Transverse colon (tissue), 4 donors: ENCODE measurements at regions of chr13 and their contacts with region 1.

Region 1: GRCh38 chr13:109156181-109156935 is 526.9 kb downstream of the MYO16 start:
- DNase-seq: no peak
- H3K4me3 ChIP-seq: no peak overlapping the region
- H3K27ac ChIP-seq: peak overlapping the region in 3 of 4 donors; percentile 23 to 41 (median 35)
- H3K4me1 ChIP-seq: no peaks in the 10 kb centered on the region
- H3K27me3 ChIP-seq: peaks cover 5% of the 10 kb centered on the region
- CTCF ChIP-seq: no peak
- EP300 ChIP-seq: no peak
- POLR2A ChIP-seq: no peak

Region 2: DNA sequence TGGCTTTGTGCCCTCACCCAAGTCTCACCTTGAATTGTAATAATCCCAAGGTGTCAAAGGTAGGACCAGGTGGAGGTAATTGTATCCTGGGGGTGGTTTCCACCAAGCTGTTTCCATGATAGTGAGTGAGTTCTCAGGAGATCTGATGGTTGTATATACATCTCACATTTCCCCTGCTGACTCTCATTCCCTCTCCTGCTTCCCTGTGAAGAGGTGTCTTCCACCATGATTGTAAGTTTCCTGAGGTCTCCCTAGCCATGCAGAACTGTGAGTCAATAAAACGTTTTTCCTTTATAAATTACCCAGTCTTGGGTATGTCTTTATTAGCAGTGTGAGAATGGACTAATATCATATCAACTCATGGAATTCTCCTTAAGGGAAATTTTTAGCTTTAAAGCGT is 1243.6 kb before region 1 on chr13:
- in situ Hi-C with region 1: no loop called
- intact Hi-C with region 1: no loop called
- DNase-seq: no peak
- H3K4me3 ChIP-seq: no peak overlapping the region
- H3K27ac ChIP-seq: no peak overlapping the region
- H3K4me1 ChIP-seq: no peaks in the 10 kb centered on the region
- H3K27me3 ChIP-seq: no peaks in the 10 kb centered on the region
- CTCF ChIP-seq: no peak
- EP300 ChIP-seq: no peak
- POLR2A ChIP-seq: no peak

Region 3: DNA sequence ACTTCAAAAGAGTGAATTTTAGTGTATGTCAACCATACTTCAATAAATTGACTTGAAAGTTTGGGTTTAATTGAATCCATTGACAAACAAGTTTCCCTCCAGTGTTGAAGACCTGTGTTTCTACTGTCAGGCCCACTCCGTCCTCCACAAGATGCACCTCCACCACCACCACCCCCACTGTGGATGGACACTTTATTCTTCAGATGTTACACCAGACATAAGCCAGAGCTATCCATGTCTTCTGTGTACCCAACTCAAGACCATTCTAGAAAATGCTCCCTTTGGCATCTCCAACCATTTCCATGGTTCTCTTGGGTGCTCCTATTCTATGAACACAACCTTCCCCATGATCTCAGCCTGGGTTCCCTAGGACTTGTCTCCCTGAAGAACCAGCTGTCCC is 943.6 kb after region 1 on chr13:
- in situ Hi-C with region 1: loop called in 1 of 4 experiments (anchors 25 kb)
- intact Hi-C with region 1: loop called (anchors 2 kb)
- DNase-seq: no peak
- H3K4me3 ChIP-seq: no peak overlapping the region
- H3K27ac ChIP-seq: no peak overlapping the region
- H3K4me1 ChIP-seq: peaks cover 0 to 7% (median 2%) of the 10 kb centered on the region in 4 donors
- H3K27me3 ChIP-seq: no peaks in the 10 kb centered on the region
- CTCF ChIP-seq: no peak
- EP300 ChIP-seq: no peak
- POLR2A ChIP-seq: no peak